ENCODE measurements at regions of chr3 and their contacts with region 1.

Region 1: GRCh38 chr3:13648060-13649001 is 99.4 kb downstream of the FBLN2 start:
- DNase-seq: peak; percentile 89 to 93 (median 92)
- ATAC-seq: peak; percentile 76
- H3K4me3 ChIP-seq: no peak overlapping the region
- H3K27ac ChIP-seq: no peak overlapping the region
- H3K4me1 ChIP-seq: peaks cover 25 to 37% of the 10 kb centered on the region in 2 experiments; a peak in 4 of 5 replicates
- H3K27me3 ChIP-seq: peaks cover 20 to 41% of the 10 kb centered on the region in 2 experiments
- CTCF ChIP-seq: peak; percentile 97 to 100 (median 99)
- EP300 ChIP-seq: no peak
- POLR2A ChIP-seq: no peak
- RAD21 ChIP-seq: peak; percentile 99 to 100

Region 2: DNA sequence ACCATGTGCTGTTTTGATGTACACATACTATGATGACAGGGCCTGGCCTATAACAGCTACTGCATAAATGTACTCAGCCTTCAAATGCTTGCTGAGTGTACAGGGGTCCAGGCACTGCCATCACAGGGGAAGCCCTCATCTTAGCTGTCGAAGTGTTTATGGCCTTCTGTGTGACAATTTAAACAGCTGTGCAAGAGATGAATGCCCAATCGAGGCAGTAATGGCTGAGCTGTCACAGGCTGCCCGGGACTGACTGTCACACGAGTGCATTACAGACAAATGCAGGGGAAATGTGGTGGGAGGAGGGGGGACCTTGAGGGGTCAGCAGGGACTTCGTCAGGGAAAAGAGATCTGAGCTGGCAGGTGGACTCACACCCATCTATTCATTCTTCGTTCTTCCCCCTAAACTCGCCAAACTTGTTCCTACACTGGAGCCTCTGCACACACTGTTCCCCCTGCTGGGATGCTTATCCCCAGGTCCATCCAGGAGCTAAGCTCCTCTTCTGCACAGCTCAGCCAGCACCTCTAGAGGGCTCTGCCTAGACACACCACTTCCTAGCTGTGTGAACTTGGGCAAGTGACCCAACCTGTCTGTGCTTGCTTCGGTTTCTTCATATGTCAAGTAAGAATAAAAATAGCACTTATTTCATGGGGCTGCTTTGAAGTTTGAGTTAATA is 418.9 kb before region 1 on chr3:
- CTCF ChIA-PET with region 1: no interaction called
- POLR2A ChIA-PET with region 1: no interaction called
- in situ Hi-C with region 1: no loop called
- intact Hi-C with region 1: loop called (anchors 10 kb)
- DNase-seq: peak; percentile 67 to 74 (median 72)
- ATAC-seq: peak; percentile 98
- H3K4me3 ChIP-seq: no peak overlapping the region
- H3K27ac ChIP-seq: no peak overlapping the region
- H3K4me1 ChIP-seq: peaks cover 4 to 11% of the 10 kb centered on the region in 2 experiments; a peak in 3 of 5 replicates
- H3K27me3 ChIP-seq: peaks cover 11 to 51% of the 10 kb centered on the region in 2 experiments; a peak in 4 of 5 replicates
- CTCF ChIP-seq: peak; percentile 77 to 78 (median 78)
- EP300 ChIP-seq: no peak
- POLR2A ChIP-seq: no peak
- RAD21 ChIP-seq: peak; percentile 23 to 70; a peak in 3 of 4 replicates

Region 3: GRCh38 chr3:13274551-13275332 is 373.6 kb before region 1 on chr3:
- CTCF ChIA-PET with region 1: no interaction called
- POLR2A ChIA-PET with region 1: no interaction called
- in situ Hi-C with region 1: no loop called
- intact Hi-C with region 1: no loop called
- DNase-seq: no peak
- ATAC-seq: no peak
- H3K4me3 ChIP-seq: no peak overlapping the region
- H3K27ac ChIP-seq: no peak overlapping the region
- H3K4me1 ChIP-seq: peaks cover 2 to 8% of the 10 kb centered on the region in 2 experiments; a peak in 3 of 5 replicates
- H3K27me3 ChIP-seq: peaks cover 46 to 72% of the 10 kb centered on the region in 2 experiments
- CTCF ChIP-seq: no peak
- EP300 ChIP-seq: no peak
- POLR2A ChIP-seq: no peak
- RAD21 ChIP-seq: no peak

Region 4: GRCh38 chr3:13495921-13496723 is 152.2 kb before region 1 on chr3:
- CTCF ChIA-PET with region 1: interaction called, 138 read pairs
- POLR2A ChIA-PET with region 1: interaction called, 5 read pairs
- in situ Hi-C with region 1: loop called (anchors 5 kb)
- intact Hi-C with region 1: loop called (anchors 1 kb)
- DNase-seq: peak; percentile 74 to 87 (median 80)
- ATAC-seq: peak; percentile 95
- H3K4me3 ChIP-seq: no peak overlapping the region
- H3K27ac ChIP-seq: no peak overlapping the region
- H3K4me1 ChIP-seq: peaks cover 0 to 16% of the 10 kb centered on the region in 2 experiments; a peak in 3 of 5 replicates
- H3K27me3 ChIP-seq: no peaks in the 10 kb centered on the region
- CTCF ChIP-seq: peak; percentile 97 to 98 (median 98)
- EP300 ChIP-seq: no peak
- POLR2A ChIP-seq: no peak
- RAD21 ChIP-seq: peak; percentile 98 to 99

Region 5: GRCh38 chr3:13619661-13620230 is 28.6 kb before region 1 on chr3:
- CTCF ChIA-PET with region 1: no interaction called
- POLR2A ChIA-PET with region 1: no interaction called
- in situ Hi-C with region 1: no loop called
- intact Hi-C with region 1: no loop called
- DNase-seq: peak; percentile 24 to 51 (median 42)
- ATAC-seq: peak; percentile 79
- H3K4me3 ChIP-seq: no peak overlapping the region
- H3K27ac ChIP-seq: no peak overlapping the region
- H3K4me1 ChIP-seq: peaks cover 0 to 10% of the 10 kb centered on the region in 2 experiments; a peak in 1 of 5 replicates
- H3K27me3 ChIP-seq: peaks cover 38 to 75% of the 10 kb centered on the region in 2 experiments
- CTCF ChIP-seq: peak; percentile 25 to 35 (median 28); a peak in 3 of 6 replicates
- EP300 ChIP-seq: no peak
- POLR2A ChIP-seq: no peak
- RAD21 ChIP-seq: no peak

Region 6: DNA sequence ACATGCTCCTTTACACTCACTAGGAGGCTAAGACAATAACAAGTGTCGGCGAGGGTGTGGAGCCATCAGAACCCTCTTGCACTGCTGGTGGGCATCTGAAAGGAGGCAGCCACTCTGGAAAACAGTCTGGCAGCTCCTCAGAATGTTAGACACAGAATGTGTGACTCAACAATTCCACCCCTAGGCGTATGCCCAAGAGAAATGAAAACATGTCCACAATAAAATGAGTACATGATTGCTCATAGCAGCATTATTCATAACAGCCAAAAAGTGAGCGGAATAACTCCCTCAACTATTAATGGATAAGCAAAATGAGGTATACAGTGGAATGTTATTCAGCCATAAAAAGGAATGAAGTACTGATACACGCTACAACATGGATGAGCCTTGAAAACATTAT is 173.7 kb after region 1 on chr3:
- CTCF ChIA-PET with region 1: no interaction called
- POLR2A ChIA-PET with region 1: no interaction called
- in situ Hi-C with region 1: no loop called
- intact Hi-C with region 1: no loop called
- DNase-seq: no peak
- ATAC-seq: no peak
- H3K4me3 ChIP-seq: no peak overlapping the region
- H3K27ac ChIP-seq: no peak overlapping the region
- H3K4me1 ChIP-seq: peaks cover 0 to 7% of the 10 kb centered on the region in 2 experiments; a peak in 2 of 5 replicates
- H3K27me3 ChIP-seq: peaks cover 4 to 48% of the 10 kb centered on the region in 2 experiments; a peak in 3 of 5 replicates
- CTCF ChIP-seq: no peak
- EP300 ChIP-seq: no peak
- POLR2A ChIP-seq: no peak
- RAD21 ChIP-seq: no peak

Region 7: DNA sequence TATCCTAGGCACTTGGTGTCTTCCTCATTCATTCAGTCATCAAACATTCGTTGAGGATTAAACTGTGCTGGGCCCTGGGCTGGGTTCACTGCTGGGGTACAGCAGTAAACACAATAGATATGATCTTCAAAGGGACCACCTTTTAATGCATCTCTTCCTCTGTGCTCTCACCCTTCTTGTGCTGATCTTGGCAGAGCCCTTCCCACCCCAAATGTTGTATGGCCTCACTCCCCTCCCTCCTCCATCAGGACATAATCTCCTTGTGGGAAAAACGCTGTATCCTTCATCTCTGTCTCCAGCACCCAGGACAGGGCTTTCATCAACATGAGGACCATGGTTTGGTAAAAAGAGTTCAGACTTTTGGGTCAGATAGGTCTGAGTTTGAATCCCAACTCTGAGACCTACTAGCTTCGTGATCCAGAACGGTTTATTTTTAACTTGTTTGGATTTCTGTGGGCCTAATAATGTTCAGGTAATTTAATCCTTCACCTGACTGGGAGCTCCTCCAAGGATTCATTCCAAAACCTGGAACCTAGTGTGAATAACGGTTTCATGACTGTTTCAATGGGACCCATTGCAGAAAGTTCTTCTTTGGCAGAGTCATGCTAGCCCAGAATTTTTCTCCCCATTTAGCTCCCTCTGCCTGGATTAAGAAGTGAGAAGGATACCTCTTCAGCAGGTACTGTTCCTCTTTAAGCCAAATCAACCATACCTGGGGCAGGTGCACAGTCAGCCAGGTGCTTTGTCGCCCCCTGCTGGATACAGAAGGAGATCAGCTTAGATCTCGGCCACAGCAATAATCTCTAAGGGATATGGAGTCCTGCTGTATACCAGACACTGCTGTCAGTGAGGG is 236.7 kb after region 1 on chr3:
- CTCF ChIA-PET with region 1: interaction called, 3 read pairs
- POLR2A ChIA-PET with region 1: no interaction called
- in situ Hi-C with region 1: loop called (anchors 5 kb)
- intact Hi-C with region 1: no loop called
- DNase-seq: peak; percentile 70 to 82 (median 80)
- ATAC-seq: peak; percentile 90
- H3K4me3 ChIP-seq: no peak overlapping the region
- H3K27ac ChIP-seq: no peak overlapping the region
- H3K4me1 ChIP-seq: peaks cover 4 to 9% of the 10 kb centered on the region in 2 experiments
- H3K27me3 ChIP-seq: peaks cover 11 to 32% of the 10 kb centered on the region in 2 experiments; a peak in 4 of 5 replicates
- CTCF ChIP-seq: peak; percentile 86 to 96 (median 89)
- EP300 ChIP-seq: no peak
- POLR2A ChIP-seq: no peak
- RAD21 ChIP-seq: peak; percentile 53 to 87

Measured in K562 (cell line).